AG04450 (cell line): ENCODE measurements at regions of chr1 and their contacts with region 1.

Region 1: DNA sequence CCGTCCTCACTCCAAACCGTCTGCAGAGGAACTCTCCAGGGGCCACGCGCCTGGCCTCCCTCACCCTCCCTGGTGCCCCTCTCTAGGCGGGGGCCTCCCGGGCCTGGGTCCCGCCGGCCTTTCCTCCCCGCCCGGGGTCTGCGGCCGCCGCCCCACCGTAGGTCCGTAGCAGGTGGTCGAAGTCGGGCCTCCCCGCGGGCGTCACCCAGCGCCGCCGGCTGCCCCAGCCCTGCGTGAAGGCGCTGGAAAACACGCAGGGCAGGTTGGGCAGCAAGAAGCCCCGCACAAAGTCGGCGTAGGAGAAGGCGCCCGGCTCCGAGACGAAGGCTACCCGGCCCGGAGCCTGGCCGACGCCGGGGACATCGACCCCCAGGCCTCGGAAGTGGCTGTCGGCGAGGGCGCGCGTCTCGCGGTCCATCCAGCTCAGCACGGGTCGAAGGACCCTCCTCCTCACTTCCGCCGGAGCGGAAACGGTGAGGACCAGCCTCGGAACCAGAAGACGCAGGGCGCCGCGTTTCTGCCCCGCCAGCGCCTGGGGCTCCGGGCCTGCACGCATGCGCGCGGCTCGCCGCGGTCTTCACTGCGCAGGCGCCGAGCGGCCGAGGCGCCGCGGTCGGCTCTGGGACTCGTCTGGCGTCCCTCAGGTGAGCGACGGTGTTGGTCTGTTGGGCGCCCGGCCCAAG is at the starts of genes JMJD4 and SNAP47:
- DNase-seq: peak; percentile 80
- H3K4me3 ChIP-seq: peak within 1 kb of the TSS; percentile 99
- H3K27ac ChIP-seq: peak within 1 kb of the TSS; percentile 31
- H3K27me3 ChIP-seq: no peaks in the 10 kb centered on the region
- CTCF ChIP-seq: no peak
- polyA plus RNA-seq, gene JMJD4: 13.4 and 20.1 TPM in 2 replicates
- polyA plus RNA-seq, gene SNAP47: 41.5 and 44.8 TPM in 2 replicates

Region 2: GRCh38 chr1:227749916-227750710 is 15.1 kb after region 1 on chr1:
- CTCF ChIA-PET with region 1: no interaction called
- POLR2A ChIA-PET with region 1: no interaction called
- DNase-seq: no peak
- H3K4me3 ChIP-seq: no peak overlapping the region
- H3K27ac ChIP-seq: no peak overlapping the region
- H3K27me3 ChIP-seq: no peaks in the 10 kb centered on the region
- CTCF ChIP-seq: no peak

Region 3: GRCh38 chr1:227762233-227762911 is 27.4 kb after region 1 on chr1:
- CTCF ChIA-PET with region 1: interaction called, 22 read pairs
- POLR2A ChIA-PET with region 1: interaction called, 11 read pairs
- DNase-seq: no peak
- H3K4me3 ChIP-seq: no peak overlapping the region
- H3K27ac ChIP-seq: peak overlapping the region; percentile 11
- H3K27me3 ChIP-seq: no peaks in the 10 kb centered on the region
- CTCF ChIP-seq: peak; percentile 77

Region 4: GRCh38 chr1:227952374-227953021 is 217.5 kb after region 1 on chr1:
- CTCF ChIA-PET with region 1: interaction called, 22 read pairs
- POLR2A ChIA-PET with region 1: no interaction called
- DNase-seq: no peak
- H3K4me3 ChIP-seq: no peak overlapping the region
- H3K27ac ChIP-seq: no peak overlapping the region
- H3K27me3 ChIP-seq: peaks cover 7% of the 10 kb centered on the region
- CTCF ChIP-seq: no peak

Region 5: GRCh38 chr1:228101994-228102790 is 367.2 kb after region 1 on chr1:
- CTCF ChIA-PET with region 1: interaction called, 4 read pairs
- POLR2A ChIA-PET with region 1: interaction called, 15 read pairs
- DNase-seq: no peak
- H3K4me3 ChIP-seq: peak overlapping the region; percentile 84
- H3K27ac ChIP-seq: no peak overlapping the region
- H3K27me3 ChIP-seq: no peaks in the 10 kb centered on the region
- CTCF ChIP-seq: peak; percentile 17